HepG2 (cell line): ENCODE measurements at regions of chr22 and their contacts with region 1.

Region 1: GRCh38 chr22:45502215-45503049 is at the start of gene FBLN1:
- DNase-seq: peak; percentile 71
- ATAC-seq: peak; percentile 83
- H3K4me3 ChIP-seq: peak within 1 kb of the TSS; percentile 82 to 88 (median 82)
- H3K27ac ChIP-seq: peak within 1 kb of the TSS; percentile 84
- H3K4me1 ChIP-seq: peaks cover 72% of the 10 kb centered on the region
- H3K27me3 ChIP-seq: no peaks in the 10 kb centered on the region; a peak in 1 of 5 replicates
- CTCF ChIP-seq: peak; percentile 68
- EP300 ChIP-seq: peak in 1 of 2 experiments; percentile 27; a peak in 1 of 4 replicates
- POLR2A ChIP-seq: peak; percentile 83 to 85
- RAD21 ChIP-seq: peak; percentile 36; the same call in 1 of the 2 replicates
- total RNA-seq, gene FBLN1: 21.6 and 37.3 TPM in 2 replicates

Region 2: DNA sequence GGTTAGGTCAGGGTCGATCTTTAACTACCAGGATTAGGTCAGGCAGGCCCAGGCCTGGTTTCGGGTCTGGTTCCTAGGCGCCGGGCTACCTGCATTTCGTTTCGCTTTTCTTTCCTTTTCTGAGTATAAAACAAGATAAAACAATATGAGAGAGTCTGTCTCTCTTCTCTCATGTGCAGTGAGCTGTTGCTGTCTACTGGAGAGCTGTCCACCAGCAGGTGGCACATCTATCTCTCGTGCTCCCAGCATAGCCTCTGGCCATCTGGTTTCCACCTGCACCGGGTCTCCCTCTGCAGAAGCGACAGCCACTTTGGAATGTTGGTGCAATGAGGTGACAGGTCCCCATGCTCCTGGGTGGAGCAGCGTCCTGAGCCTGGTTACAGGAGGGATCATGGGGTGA is 61.3 kb before region 1 on chr22:
- CTCF ChIA-PET with region 1: no interaction called
- POLR2A ChIA-PET with region 1: interaction called, 12 read pairs
- in situ Hi-C with region 1: no loop called
- intact Hi-C with region 1: loop called (anchors 1 kb)
- DNase-seq: peak; percentile 71
- ATAC-seq: peak; percentile 97
- H3K4me3 ChIP-seq: peak overlapping the region; percentile 22 to 44 (median 32); a peak in 4 of 6 replicates
- H3K27ac ChIP-seq: no peak overlapping the region
- H3K4me1 ChIP-seq: peaks cover 47% of the 10 kb centered on the region
- H3K27me3 ChIP-seq: no peaks in the 10 kb centered on the region
- CTCF ChIP-seq: peak; percentile 93
- EP300 ChIP-seq: no peak
- POLR2A ChIP-seq: no peak
- RAD21 ChIP-seq: peak; percentile 84

Region 3: DNA sequence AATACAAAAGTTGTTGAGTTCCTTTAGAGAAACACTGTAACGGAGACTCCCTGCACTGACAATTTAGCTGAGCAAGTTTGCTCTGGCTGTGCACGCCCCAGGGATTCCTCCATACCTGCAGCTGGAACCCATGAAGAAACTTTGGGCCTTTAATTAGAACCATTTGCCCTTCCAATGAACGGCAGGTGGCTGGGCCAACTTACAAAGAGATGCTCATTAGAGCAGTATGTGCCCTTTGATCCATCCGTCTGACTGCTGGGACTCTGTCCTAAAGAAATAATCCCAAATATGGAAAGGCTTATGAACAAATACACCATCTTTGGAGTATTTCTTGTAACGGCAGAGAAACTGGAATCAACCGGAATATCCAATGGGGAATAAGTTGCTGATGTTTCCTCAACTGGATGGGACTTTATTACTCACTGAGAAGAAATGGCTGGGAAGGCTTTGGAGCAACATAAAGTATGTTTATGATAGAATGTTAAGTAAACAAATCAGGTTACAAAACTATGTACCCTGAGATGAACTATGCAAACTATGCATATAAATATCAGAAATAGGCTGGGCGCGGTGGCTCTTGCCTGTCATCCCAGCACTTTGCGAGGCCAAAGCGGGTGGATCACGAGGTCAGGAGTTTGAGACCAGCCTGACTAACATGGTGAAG is 24.2 kb before region 1 on chr22:
- CTCF ChIA-PET with region 1: no interaction called
- POLR2A ChIA-PET with region 1: interaction called, 5 read pairs
- in situ Hi-C with region 1: no loop called
- intact Hi-C with region 1: loop called (anchors 1 kb)
- DNase-seq: peak; percentile 77
- ATAC-seq: peak; percentile 53
- H3K4me3 ChIP-seq: no peak overlapping the region
- H3K27ac ChIP-seq: peak overlapping the region; percentile 16
- H3K4me1 ChIP-seq: peaks cover 79% of the 10 kb centered on the region
- H3K27me3 ChIP-seq: no peaks in the 10 kb centered on the region
- CTCF ChIP-seq: no peak
- EP300 ChIP-seq: no peak
- POLR2A ChIP-seq: no peak
- RAD21 ChIP-seq: no peak

Region 4: DNA sequence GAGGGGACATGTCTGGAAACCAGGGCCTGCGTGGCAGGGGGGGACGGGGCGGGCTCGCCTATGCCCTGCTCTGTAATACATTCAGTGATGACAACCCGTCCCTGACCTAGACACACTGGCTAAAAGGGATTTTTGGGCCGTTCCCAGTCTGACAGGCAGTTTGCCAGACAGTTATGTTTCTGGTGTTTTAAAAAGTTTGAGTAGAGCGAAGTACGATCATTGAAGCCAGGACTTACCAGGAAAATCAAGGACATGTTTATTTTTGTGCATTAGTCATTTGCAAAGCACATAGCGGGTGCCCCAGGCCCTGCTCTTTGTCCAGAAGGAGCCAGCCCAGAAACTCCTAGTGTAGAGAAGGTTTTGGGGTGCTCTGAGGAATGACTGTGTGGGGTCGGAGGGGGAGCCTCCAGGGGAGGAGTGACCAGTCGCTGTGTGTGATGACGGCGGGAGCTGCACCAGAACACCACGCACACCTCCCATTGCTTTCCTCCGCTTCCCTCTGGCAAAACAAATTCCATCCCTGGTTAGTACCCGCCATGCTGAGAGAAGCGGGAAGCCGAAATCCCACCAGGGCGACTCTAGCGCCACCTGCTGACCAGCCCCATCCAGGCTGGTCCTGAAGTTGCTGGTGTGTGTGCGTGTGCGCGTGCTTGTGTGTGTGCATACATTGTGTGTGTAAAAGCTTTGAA is 51.1 kb after region 1 on chr22:
- CTCF ChIA-PET with region 1: no interaction called
- POLR2A ChIA-PET with region 1: interaction called, 4 read pairs
- in situ Hi-C with region 1: no loop called
- intact Hi-C with region 1: loop called (anchors 10 kb)
- DNase-seq: peak; percentile 73
- ATAC-seq: peak; percentile 82
- H3K4me3 ChIP-seq: no peak overlapping the region; a peak in 1 of 6 replicates
- H3K27ac ChIP-seq: peak overlapping the region; percentile 43
- H3K4me1 ChIP-seq: peaks cover 31% of the 10 kb centered on the region
- H3K27me3 ChIP-seq: no peaks in the 10 kb centered on the region
- CTCF ChIP-seq: peak; percentile 98
- EP300 ChIP-seq: no peak
- POLR2A ChIP-seq: no peak
- RAD21 ChIP-seq: peak; percentile 94